ENCODE measurements at regions of chr1 and their contacts with region 1.

Region 1: DNA sequence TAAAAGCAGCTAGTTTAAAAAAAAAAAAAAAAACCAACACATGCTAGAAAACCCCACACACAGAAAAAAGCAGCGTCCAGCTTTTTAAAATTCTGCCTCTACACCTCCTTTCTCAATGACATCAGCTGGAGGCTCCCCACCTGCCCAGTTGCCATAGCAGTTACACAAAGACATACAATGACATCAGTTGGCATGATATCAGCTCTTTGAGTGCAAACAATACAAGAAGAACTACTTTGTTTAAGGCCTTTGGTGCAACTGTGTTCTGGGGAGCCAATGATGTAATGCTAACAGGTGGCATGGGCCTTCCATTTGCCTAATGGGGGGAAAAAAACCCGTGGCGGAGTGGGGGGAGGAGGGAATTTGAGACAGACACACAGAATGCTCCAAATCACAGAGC is 32.9 kb downstream of the DUSP10 start:
- DNase-seq: peak; percentile 94 to 98 (median 97)
- H3K4me3 ChIP-seq: no peak overlapping the region
- H3K27ac ChIP-seq: peak overlapping the region; percentile 98
- H3K4me1 ChIP-seq: peaks cover 56 to 93% (median 81%) of the 10 kb centered on the region in 4 experiments
- H3K27me3 ChIP-seq: no peaks in the 10 kb centered on the region

Region 2: DNA sequence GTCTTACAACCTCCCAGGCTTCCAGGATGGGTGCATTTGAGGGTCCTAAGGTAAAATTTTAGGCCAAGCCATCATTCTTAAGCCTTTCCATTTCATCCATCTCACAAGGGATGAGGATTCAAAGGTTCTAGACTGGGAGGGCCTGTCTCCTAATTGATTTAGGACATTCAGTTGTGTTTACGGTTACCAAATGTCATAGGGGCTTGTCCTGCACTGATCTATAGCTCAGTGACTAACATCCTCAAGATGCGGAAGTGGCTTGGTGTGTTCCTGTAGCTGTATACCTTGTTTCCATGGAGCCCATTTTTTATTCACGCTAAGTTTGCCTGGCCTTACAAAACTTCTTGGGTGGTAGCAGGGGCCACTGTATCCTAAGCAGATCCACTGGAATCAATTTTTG is 19.8 kb before region 1 on chr1:
- CTCF ChIA-PET with region 1: interaction called, 12 read pairs
- POLR2A ChIA-PET with region 1: interaction called, 10 read pairs
- DNase-seq: peak; percentile 78 to 95 (median 93)
- H3K4me3 ChIP-seq: no peak overlapping the region
- H3K27ac ChIP-seq: peak overlapping the region; percentile 69 to 86
- H3K4me1 ChIP-seq: peaks cover 0 to 40% (median 26%) of the 10 kb centered on the region in 4 experiments
- H3K27me3 ChIP-seq: no peaks in the 10 kb centered on the region

Region 3: GRCh38 chr1:221697923-221698425 is 11.0 kb before region 1 on chr1:
- CTCF ChIA-PET with region 1: interaction called, 11 read pairs
- POLR2A ChIA-PET with region 1: interaction called, 4 read pairs
- DNase-seq: no peak
- H3K4me3 ChIP-seq: no peak overlapping the region
- H3K27ac ChIP-seq: no peak overlapping the region
- H3K4me1 ChIP-seq: peaks cover 0 to 26% (median 7%) of the 10 kb centered on the region in 4 experiments
- H3K27me3 ChIP-seq: no peaks in the 10 kb centered on the region

Region 4: DNA sequence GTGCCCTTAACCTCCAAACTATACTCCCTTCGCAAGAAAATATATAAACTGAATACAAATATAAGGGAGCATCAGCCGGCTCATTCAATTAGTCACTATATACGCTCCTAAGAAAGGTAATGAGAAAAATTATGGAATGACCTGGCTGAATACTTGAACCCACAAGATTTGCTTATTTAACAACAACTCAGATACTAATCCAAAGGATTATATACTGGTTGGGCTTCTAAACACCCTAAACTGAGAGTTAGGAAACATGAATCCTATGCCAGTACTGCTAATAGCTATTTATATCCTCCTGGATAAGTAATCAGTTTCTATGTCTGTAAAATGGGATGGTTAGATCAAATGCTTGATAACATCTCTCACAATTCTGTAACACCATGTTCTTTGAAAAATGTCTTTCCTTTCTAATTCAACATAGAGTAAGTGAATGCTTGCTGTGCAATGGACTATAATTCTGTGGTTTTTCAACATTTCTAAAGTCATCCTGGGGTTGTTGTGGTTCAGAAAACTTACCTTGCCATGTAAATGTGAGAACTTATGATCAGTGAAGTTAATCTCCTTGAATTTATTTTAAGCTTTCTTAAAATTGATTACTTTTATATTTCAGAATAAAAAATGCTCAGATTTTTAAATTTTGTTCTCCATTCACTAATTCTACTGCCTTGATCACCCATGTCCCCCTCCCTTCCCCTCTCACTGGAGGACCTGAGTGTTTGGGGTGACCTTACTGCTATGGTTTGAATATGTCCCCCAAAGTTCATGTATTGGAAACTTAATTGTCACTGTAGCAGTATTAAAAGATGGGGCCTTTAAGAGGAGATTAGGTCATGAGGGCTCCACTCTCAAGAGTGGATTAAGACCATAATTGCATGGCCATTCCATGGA is 18.4 kb after region 1 on chr1:
- CTCF ChIA-PET with region 1: interaction called, 16 read pairs
- POLR2A ChIA-PET with region 1: interaction called, 6 read pairs
- DNase-seq: no peak
- H3K4me3 ChIP-seq: no peak overlapping the region
- H3K27ac ChIP-seq: no peak overlapping the region
- H3K4me1 ChIP-seq: peaks cover 6 to 41% (median 27%) of the 10 kb centered on the region in 4 experiments
- H3K27me3 ChIP-seq: no peaks in the 10 kb centered on the region

Region 5: DNA sequence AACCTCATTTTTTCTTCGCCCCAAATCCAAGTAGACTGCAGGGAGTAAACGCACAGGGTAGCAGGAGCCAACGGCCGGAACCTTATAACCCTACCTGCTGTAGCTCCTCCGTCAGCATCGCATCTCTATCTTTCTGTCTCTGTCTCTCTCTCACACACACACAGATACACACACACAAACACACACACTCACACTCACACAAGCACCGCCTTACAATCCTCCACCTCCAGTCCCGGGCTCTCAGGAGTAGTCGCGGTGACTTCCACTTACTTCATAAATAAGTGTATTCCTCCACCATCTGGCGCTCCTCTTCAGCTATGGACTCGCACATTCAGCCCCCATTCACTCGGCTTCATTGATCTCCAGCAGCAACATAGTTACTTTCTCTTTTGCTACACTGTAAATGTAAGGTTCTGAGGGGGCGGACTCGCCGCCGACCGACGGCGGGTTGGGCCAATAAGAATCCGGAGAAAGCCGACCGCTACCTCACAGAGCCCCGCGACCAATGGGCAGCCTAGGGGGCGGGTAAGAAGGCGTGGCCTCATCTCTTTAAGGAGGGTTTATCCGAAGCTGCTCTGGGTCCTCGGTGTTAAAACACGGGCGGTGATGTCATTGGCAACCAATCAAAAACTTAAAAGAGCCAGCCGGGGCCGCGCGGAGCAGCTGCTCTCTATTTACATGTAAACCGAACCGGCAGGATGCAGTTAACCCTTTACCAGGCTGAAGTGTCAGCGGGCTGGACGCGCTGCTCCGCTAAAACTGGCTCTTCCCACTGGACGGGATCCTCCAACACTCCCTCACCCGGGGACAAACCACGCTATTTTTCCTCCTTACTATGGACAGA is 32.9 kb after region 1 on chr1 and contains the start of gene DUSP10:
- CTCF ChIA-PET with region 1: interaction called, 33 read pairs
- POLR2A ChIA-PET with region 1: interaction called, 58 read pairs
- DNase-seq: peak; percentile 100
- H3K4me3 ChIP-seq: peak within 1 kb of the TSS; percentile 79 to 100 (median 99)
- H3K27ac ChIP-seq: peak within 1 kb of the TSS; percentile 98
- H3K4me1 ChIP-seq: peaks cover 15 to 61% (median 45%) of the 10 kb centered on the region in 4 experiments
- H3K27me3 ChIP-seq: no peaks in the 10 kb centered on the region

Measured in common myeloid progenitor, CD34-positive (primary cell).